Psoas muscle (tissue), 8 donors: ENCODE measurements at regions of chr2 and their contacts with region 1.

Region 1: DNA sequence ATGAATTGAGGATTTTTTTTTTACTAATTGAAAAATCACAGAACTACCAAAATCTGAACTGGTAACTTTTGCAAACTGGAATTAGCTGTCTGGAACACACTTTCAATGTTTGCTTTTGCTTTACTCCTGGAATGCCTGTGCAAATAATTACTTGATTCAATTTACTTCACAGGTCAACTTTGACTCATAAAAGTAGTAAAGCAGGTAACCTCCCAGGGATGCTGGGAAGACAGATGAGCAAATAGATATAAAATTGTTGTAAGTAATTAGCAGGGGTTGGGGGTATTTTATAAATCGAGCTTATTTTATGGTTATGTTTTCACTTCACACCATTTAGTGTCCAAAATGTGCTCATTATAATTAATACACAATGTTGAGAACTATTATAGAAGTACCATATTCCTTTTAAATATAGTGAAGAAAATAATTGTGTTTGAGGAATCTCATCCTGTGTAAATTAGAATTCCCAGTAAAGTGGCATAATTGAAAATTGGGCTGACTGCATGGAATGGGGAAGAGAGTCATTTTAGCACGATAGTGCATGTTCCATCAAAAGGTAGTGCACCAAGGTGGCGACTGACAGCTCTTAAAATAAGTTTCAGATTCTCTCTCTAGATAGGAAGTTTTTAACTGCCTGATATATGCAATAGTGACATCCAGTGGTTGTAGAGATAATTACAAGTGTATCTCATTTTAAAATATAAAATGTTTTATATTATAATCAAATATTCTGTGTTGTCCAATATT is 398.1 kb upstream of the HNRNPA3 start:
- DNase-seq: no peak
- ATAC-seq: no peak
- H3K4me3 ChIP-seq: no peak overlapping the region
- H3K27ac ChIP-seq: no peak overlapping the region
- H3K4me1 ChIP-seq: no peaks in the 10 kb centered on the region
- H3K27me3 ChIP-seq: no peaks in the 10 kb centered on the region
- CTCF ChIP-seq: peak; percentile 78

Region 2: DNA sequence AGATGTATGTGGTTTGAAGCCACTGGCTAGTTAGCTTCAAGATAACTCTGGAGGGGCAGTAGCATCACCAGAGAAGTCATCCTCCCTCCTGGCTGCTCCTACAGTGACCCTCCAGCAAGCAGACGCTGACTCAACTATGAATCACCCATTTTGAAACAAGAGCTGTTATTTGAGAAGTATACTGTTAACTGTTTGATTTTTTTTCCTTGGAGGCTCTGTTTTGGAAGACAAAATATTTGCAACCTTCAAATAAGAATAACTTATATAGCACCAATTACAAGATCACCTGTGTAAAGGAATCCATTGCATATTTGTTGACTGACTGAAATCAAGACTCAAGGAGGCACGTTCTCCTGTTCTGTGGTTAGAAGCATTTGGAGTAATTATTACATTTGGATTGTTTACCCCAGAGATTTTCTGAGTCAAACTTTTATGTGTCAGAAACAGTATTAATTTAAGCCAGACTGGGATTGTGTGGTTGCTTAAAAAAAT is 231.4 kb before region 1 on chr2:
- intact Hi-C with region 1: no loop called
- DNase-seq: no peak
- ATAC-seq: peak in 3 of 4 donors; percentile 39 to 68 (median 60)
- H3K4me3 ChIP-seq: no peak overlapping the region
- H3K27ac ChIP-seq: no peak overlapping the region
- H3K4me1 ChIP-seq: no peaks in the 10 kb centered on the region
- H3K27me3 ChIP-seq: no peaks in the 10 kb centered on the region
- CTCF ChIP-seq: no peak

Region 3: GRCh38 chr2:176653479-176654443 is 160.7 kb before region 1 on chr2:
- intact Hi-C with region 1: loop called (anchors 5 to 10 kb)
- DNase-seq: peak; percentile 58 to 76
- ATAC-seq: peak; percentile 83 to 99 (median 90)
- H3K4me3 ChIP-seq: no peak overlapping the region
- H3K27ac ChIP-seq: no peak overlapping the region
- H3K4me1 ChIP-seq: peaks cover 6% of the 10 kb centered on the region
- H3K27me3 ChIP-seq: no peaks in the 10 kb centered on the region
- CTCF ChIP-seq: peak; percentile 78

Region 4: DNA sequence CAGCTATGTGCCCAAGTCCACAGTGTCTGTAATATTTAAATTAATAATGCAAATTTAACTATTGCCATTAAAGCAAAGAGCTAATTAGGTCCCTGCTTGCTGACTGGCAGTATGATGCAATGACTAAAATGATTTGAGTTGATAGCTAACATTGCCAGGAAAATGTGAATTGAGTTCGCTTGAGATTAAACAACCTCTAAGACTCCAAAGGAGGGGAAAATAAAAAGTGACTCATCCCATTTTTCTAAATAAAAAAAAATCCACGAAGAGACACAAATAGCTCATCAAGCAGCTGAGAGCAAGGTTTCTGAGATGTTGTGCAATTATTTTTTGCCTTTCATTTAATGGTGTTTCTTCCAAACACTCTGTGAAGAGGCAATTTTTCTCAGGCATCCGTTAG is 132.2 kb before region 1 on chr2:
- intact Hi-C with region 1: loop called in 1 of 2 experiments (anchors 10 kb)
- DNase-seq: no peak
- ATAC-seq: peak in 1 of 4 donors; percentile 36
- H3K4me3 ChIP-seq: no peak overlapping the region
- H3K27ac ChIP-seq: no peak overlapping the region
- H3K4me1 ChIP-seq: no peaks in the 10 kb centered on the region
- H3K27me3 ChIP-seq: peaks cover 0 to 4% (median 3%) of the 10 kb centered on the region in 3 donors
- CTCF ChIP-seq: no peak

Region 5: DNA sequence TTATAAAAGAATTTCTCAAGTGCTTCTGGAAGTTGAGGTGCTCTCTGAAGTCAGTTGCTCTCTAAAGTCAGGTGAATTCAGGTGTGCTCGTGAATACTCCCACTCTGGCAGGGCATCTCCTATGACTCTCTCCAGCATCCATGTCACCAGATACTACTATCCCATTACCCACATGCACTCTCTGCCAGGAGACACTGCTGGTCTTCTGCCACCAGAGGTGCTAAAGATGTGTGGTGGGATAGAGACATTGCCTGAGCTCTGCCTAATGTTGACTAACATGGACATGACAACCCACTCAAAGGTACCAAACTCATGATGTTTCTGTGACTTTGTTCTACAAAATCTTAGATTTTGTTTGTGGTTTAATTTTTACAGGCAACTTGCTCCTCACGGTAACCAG is 291.7 kb after region 1 on chr2:
- intact Hi-C with region 1: no loop called
- DNase-seq: no peak
- ATAC-seq: no peak
- H3K4me3 ChIP-seq: no peak overlapping the region
- H3K27ac ChIP-seq: no peak overlapping the region
- H3K4me1 ChIP-seq: no peaks in the 10 kb centered on the region
- H3K27me3 ChIP-seq: peaks cover 0 to 2% (median 0%) of the 10 kb centered on the region in 3 donors
- CTCF ChIP-seq: no peak